ENCODE measurements at regions of chr12 and their contacts with region 1.

Region 1: DNA sequence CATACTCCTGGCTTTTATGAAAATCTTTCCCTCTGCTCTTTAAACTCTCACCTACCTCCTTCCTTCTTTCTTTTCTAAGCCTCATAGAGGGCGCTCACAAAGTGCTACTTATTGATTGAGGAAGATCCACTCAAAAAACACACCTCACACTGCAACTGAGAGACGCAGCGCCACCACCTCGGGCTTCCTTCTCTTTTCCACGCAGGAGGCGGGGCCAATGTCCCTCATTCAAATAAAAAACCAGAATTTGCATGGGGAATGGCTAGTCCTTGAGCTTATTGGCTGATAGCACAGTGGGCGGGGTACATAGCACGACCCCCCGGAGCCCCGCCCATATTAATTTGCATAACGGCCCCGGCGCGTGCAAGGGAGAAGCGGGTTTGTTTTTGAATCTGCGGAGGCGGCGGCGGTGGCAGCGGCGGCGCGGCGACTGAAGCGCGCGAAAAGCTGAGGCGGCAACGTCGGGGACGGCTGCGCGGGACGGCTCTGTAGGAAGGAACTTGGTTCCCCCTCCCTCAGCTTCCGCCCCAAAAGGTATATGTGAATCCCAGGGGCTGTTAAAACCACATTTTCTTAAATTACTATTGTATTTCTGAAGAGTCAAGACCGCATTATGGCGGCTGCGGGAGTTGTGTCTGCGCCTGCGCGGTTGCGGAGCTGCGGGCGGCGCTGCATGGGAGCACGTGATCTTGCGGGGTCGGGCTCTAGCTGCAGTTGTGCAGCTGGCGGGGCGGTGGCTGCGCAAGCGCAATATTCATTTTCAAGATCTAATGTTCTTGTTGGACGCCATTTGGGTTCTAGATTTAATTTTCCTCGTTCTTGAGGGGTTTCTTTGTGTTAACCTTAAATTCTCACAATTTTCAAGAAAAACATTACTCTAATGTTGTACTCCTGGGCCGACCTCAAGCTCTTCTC is at the start of gene ATF7IP:
- DNase-seq: peak; percentile 97
- H3K4me3 ChIP-seq: peak within 1 kb of the TSS; percentile 66 to 73
- H3K27ac ChIP-seq: peak within 1 kb of the TSS; percentile 96 to 97
- H3K4me1 ChIP-seq: no peaks in the 10 kb centered on the region
- H3K27me3 ChIP-seq: no peaks in the 10 kb centered on the region
- CTCF ChIP-seq: peak in 3 of 4 experiments; percentile 38 to 48 (median 39)
- POLR2A ChIP-seq: peak; percentile 71
- total RNA-seq, gene ATF7IP: 47.1 to 49.9 TPM

Region 2: DNA sequence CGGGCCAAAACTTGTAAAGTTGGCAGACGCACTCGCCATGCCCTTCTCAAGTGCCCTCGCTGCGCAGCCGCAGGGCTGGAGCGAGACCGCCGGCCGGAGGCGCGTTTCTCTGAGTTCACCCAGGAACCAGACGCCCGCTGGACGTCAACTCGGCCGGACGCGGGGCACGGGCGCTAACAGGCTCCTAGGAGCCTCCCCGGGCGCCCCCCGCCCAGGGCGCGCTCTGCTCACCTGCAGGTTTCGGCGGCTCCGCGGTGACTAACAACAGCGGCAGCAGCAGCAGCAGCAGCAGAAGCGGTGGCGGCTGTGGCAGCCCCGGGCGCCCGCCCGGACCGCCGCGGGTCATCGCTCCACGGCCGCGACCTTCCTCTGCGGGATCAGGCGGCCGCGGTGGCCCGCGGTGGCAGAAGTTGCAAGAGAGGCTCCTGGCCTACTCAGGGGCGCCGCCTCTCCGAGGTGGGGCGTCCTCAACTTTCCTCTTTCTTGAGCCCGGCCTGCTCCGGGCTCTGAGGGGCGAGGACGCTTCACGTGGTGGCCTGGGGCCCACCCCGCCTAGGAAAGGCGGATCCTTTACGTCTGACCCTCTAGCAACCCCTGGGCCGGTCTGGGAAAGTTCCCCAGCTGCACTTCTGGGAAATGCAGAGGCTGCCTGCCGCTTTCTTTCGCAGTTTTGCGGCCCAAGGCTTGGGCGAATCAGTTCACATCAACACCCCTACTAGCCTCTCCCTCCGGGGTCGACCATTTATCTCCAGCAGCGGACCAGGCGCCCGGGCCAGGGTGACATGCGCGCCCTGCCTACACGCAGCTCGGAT is 202.0 kb after region 1 on chr12 and contains the start of gene PLBD1:
- intact Hi-C with region 1: loop called (anchors 5 kb)
- DNase-seq: peak; percentile 37
- H3K4me3 ChIP-seq: peak within 1 kb of the TSS; percentile 50 to 51
- H3K27ac ChIP-seq: peak within 1 kb of the TSS; percentile 35 to 66
- H3K4me1 ChIP-seq: no peaks in the 10 kb centered on the region
- H3K27me3 ChIP-seq: no peaks in the 10 kb centered on the region
- CTCF ChIP-seq: no peak
- POLR2A ChIP-seq: peak; percentile 30
- total RNA-seq, gene PLBD1: 5.7 to 19.5 TPM